GM12878 (cell line): ENCODE measurements at regions of chr3 and their contacts with region 1.

Region 1: GRCh38 chr3:4493014-4493940 is at the start of gene ITPR1:
- DNase-seq: peak; percentile 96
- ATAC-seq: peak; percentile 89
- H3K4me3 ChIP-seq: peak within 1 kb of the TSS; percentile 87
- H3K27ac ChIP-seq: peak within 1 kb of the TSS; percentile 82
- H3K4me1 ChIP-seq: peaks cover 14% of the 10 kb centered on the region
- H3K27me3 ChIP-seq: no peaks in the 10 kb centered on the region; a peak in 1 of 4 replicates
- CTCF ChIP-seq: no peak
- EP300 ChIP-seq: no peak
- POLR2A ChIP-seq: peak; percentile 100
- RAD21 ChIP-seq: peak; percentile 25; the same call in 1 of the 2 replicates
- polyA plus RNA-seq, gene ITPR1: 12.2 to 12.6 TPM

Region 2: GRCh38 chr3:4261406-4261805 is 231.9 kb before region 1 on chr3:
- CTCF ChIA-PET with region 1: no interaction called
- POLR2A ChIA-PET with region 1: no interaction called
- RAD21 ChIA-PET with region 1: no interaction called
- SMC1A ChIA-PET with region 1: no interaction called
- in situ Hi-C with region 1: no loop called
- intact Hi-C with region 1: no loop called
- DNase-seq: no peak
- ATAC-seq: no peak
- H3K4me3 ChIP-seq: no peak overlapping the region
- H3K27ac ChIP-seq: no peak overlapping the region
- H3K4me1 ChIP-seq: no peaks in the 10 kb centered on the region
- H3K27me3 ChIP-seq: no peaks in the 10 kb centered on the region
- CTCF ChIP-seq: no peak
- EP300 ChIP-seq: no peak
- POLR2A ChIP-seq: no peak
- RAD21 ChIP-seq: no peak

Region 3: GRCh38 chr3:4350789-4351163 is 142.5 kb before region 1 on chr3:
- CTCF ChIA-PET with region 1: interaction called, 22 read pairs
- POLR2A ChIA-PET with region 1: interaction called, 3 read pairs
- RAD21 ChIA-PET with region 1: interaction called, 13 read pairs
- SMC1A ChIA-PET with region 1: interaction called, 11 read pairs
- in situ Hi-C with region 1: no loop called
- intact Hi-C with region 1: loop called (anchors 5 kb)
- DNase-seq: peak; percentile 31
- ATAC-seq: peak; percentile 96
- H3K4me3 ChIP-seq: no peak overlapping the region
- H3K27ac ChIP-seq: no peak overlapping the region
- H3K4me1 ChIP-seq: no peaks in the 10 kb centered on the region
- H3K27me3 ChIP-seq: no peaks in the 10 kb centered on the region
- CTCF ChIP-seq: peak; percentile 64 to 78 (median 73)
- EP300 ChIP-seq: no peak
- POLR2A ChIP-seq: no peak
- RAD21 ChIP-seq: peak; percentile 95

Region 4: DNA sequence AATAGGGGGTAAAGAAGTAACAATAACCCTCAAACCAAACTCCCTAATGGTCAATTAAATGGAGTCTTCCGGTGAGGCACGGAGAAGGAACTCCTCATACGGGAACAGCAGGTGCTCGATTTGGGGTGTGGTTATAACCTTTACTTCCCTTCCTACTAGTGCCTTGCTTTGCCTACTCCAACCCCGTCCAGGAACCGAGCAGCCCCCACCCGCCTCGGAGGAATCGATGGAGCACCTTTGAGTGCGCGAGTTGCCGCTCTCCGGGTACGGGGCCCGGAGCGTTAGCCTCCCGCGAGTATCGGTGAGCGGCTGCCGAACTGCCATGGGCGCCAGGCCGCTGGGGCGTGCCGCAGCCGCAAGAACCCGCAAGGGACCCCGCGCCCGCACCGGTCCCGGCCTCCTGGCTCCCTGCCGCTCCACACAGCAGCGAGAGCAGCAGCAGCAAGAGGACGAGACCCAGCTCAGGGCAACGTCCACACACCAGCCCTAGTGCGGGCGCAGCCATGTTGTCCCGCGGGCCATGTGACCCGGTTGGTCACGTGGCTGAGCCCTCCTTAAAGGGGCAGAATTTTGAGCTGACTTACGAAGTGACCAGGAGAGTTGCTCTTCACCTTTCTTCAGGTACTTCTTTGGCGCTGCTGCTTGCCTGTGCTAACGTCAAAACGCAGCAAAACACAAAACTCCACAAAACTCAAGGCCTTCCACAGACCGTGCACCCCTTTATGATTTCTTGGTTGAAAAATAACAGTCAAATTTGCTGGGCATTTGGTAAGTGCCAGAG is 26.3 kb before region 1 on chr3 and contains the start of gene SUMF1:
- CTCF ChIA-PET with region 1: interaction called, 4 read pairs
- POLR2A ChIA-PET with region 1: interaction called, 6 read pairs
- RAD21 ChIA-PET with region 1: interaction called, 16 read pairs
- SMC1A ChIA-PET with region 1: interaction called, 5 read pairs
- in situ Hi-C with region 1: no loop called
- intact Hi-C with region 1: loop called (anchors 2 kb)
- DNase-seq: no peak
- ATAC-seq: peak; percentile 100
- H3K4me3 ChIP-seq: peak within 1 kb of the TSS; percentile 89
- H3K27ac ChIP-seq: peak within 1 kb of the TSS; percentile 69
- H3K4me1 ChIP-seq: peaks cover 8% of the 10 kb centered on the region
- H3K27me3 ChIP-seq: no peaks in the 10 kb centered on the region
- CTCF ChIP-seq: no peak
- EP300 ChIP-seq: no peak
- POLR2A ChIP-seq: peak; percentile 98
- RAD21 ChIP-seq: no peak
- polyA plus RNA-seq, gene SUMF1: 3.2 to 3.5 TPM

Region 5: DNA sequence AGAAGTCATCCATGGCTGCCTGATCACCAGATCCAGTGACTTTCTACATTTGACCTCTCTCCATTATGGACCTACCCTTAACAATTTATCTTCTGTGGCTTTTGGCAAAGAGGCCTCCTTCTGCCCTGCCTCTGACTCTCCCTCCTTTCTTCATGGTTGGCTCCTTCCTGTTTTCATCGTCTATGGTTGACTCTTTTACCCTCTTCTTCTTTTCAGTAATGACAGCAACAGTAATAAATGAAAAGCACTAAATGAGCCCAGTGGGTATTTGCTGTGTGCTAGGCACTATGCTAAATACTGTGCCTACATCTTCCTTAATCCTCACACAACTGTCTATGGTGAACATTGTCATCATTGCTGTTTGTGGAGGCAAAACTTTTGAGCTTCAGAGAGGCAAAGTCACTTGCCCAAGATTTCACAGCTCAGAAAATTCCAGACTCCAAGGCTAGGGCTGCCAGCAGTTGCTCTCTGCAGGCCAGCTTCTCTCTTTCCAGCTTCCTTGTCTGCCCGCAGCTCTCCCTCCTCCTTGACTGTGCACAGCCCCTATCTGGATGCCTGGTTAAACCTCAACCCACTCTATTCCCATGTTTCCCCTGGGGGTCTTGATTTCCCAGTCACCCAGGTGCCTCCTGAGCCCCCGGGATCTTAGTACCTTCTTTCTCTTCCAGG is 24.5 kb after region 1 on chr3:
- CTCF ChIA-PET with region 1: interaction called, 3 read pairs
- POLR2A ChIA-PET with region 1: interaction called, 7 read pairs
- RAD21 ChIA-PET with region 1: interaction called, 7 read pairs
- SMC1A ChIA-PET with region 1: interaction called, 180 read pairs
- in situ Hi-C with region 1: no loop called
- intact Hi-C with region 1: no loop called
- DNase-seq: no peak
- ATAC-seq: peak; percentile 68
- H3K4me3 ChIP-seq: no peak overlapping the region
- H3K27ac ChIP-seq: no peak overlapping the region
- H3K4me1 ChIP-seq: peaks cover 8% of the 10 kb centered on the region
- H3K27me3 ChIP-seq: no peaks in the 10 kb centered on the region
- CTCF ChIP-seq: no peak
- EP300 ChIP-seq: no peak
- POLR2A ChIP-seq: no peak
- RAD21 ChIP-seq: no peak

Region 6: GRCh38 chr3:4633078-4634004 is 140.1 kb after region 1 on chr3:
- CTCF ChIA-PET with region 1: interaction called, 7 read pairs
- POLR2A ChIA-PET with region 1: interaction called, 4 read pairs
- RAD21 ChIA-PET with region 1: interaction called, 5 read pairs
- SMC1A ChIA-PET with region 1: interaction called, 15 read pairs
- in situ Hi-C with region 1: no loop called
- intact Hi-C with region 1: loop called (anchors 5 kb)
- DNase-seq: peak; percentile 30
- ATAC-seq: peak; percentile 86
- H3K4me3 ChIP-seq: no peak overlapping the region
- H3K27ac ChIP-seq: no peak overlapping the region
- H3K4me1 ChIP-seq: no peaks in the 10 kb centered on the region
- H3K27me3 ChIP-seq: no peaks in the 10 kb centered on the region
- CTCF ChIP-seq: peak; percentile 75 to 81 (median 77)
- EP300 ChIP-seq: no peak
- POLR2A ChIP-seq: no peak
- RAD21 ChIP-seq: peak; percentile 93